ENCODE measurements at regions of chr1 and their contacts with region 1.

Region 1: DNA sequence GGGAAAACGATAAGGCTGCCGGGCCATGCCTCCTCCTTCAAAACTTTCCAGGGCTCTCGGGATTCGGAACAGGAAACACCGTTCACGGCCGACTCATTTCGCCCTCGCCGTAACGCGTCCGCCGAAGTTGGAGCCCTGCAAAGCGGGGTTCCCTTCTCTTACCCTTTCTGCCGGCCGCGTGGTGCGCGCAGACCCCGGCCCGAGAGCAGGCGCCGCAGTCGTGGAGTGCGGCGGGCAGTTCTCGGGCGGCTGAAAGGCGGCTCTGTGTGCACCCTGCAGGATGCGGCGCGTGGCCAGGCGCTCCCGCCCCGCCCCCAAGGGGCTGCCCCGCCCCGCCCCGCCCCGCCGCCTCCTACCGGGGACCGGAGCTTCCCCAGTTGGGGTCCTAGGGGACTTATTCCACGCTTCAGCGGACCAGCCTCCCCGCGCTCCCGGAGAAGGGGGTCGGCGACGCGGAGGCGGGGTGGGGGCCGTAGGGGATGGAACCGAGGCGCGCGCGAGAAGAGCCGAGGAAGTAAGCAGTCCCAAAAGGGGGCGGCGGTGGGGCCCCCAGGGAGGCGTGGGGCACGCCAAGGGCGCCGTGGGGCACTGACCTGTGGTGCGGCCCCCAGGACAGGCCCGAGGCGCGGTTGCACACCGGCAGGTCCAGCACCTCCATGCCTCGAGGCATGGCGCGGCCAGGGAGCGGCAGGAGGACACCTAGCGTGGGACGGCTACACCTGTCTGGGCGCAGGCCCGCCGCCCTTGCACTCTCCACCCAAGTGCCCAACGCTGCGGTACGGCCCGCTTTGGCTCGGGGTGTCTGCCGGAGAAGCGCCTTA is at the start of gene MCOLN2:
- DNase-seq: peak; percentile 52
- H3K4me3 Mint-ChIP-seq: peak within 1 kb of the TSS; percentile 88
- H3K27ac Mint-ChIP-seq: peak within 1 kb of the TSS; percentile 88
- H3K4me1 Mint-ChIP-seq: peaks cover 55% of the 10 kb centered on the region
- H3K27me3 Mint-ChIP-seq: peaks cover 12% of the 10 kb centered on the region
- total RNA-seq, gene MCOLN2: 117 and 119 TPM in 2 replicates

Region 2: GRCh38 chr1:84853741-84854721 is 143.0 kb before region 1 on chr1:
- intact Hi-C with region 1: loop called (anchors 2 kb)
- DNase-seq: peak; percentile 61
- H3K4me3 Mint-ChIP-seq: peak overlapping the region; percentile 0
- H3K27ac Mint-ChIP-seq: peak overlapping the region; percentile 66
- H3K4me1 Mint-ChIP-seq: peaks cover 42% of the 10 kb centered on the region
- H3K27me3 Mint-ChIP-seq: peaks cover 1% of the 10 kb centered on the region

Region 3: GRCh38 chr1:85027242-85027983 is 30.4 kb after region 1 on chr1:
- intact Hi-C with region 1: loop called (anchors 1 kb)
- DNase-seq: no peak
- H3K4me3 Mint-ChIP-seq: no peak overlapping the region
- H3K27ac Mint-ChIP-seq: peak overlapping the region; percentile 53
- H3K4me1 Mint-ChIP-seq: peaks cover 10% of the 10 kb centered on the region
- H3K27me3 Mint-ChIP-seq: peaks cover 6% of the 10 kb centered on the region

Region 4: DNA sequence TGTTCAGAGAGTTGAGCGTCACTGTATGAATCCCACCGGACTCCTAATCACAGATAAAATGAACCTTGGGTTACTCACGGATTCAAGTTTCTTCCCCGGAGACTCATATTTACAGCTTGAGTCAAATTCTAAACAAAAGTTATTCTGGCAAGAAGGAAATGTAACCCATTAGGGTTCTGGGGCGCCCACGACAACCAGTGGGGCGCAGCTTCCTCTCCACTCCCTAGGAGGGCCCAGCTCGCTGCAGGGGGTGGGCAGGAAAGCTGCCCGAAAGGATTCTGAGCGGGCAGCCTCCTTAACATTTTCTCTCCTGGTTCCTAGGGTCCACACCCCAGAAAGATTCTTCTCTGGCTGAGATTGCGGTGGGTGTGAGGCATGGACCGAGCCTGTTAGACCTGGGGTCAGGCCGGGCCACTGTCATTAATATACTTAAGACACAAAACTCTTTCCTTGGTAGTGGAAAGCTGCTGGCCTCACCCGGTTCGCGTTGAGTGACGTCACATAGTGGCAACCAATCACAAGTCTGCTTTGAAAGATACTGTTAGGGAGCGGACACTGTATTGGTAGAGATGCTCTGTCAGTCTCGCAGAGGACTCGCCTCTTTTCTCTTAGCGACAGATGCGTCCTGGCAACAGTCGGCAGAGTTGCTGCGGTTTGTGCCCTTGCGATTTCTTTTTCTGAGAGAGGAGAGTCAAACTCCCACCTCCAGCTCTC is 64.8 kb after region 1 on chr1:
- intact Hi-C with region 1: loop called (anchors 1 kb)
- DNase-seq: peak; percentile 87
- H3K4me3 Mint-ChIP-seq: peak overlapping the region; percentile 85
- H3K27ac Mint-ChIP-seq: peak overlapping the region; percentile 62
- H3K4me1 Mint-ChIP-seq: peaks cover 15% of the 10 kb centered on the region
- H3K27me3 Mint-ChIP-seq: peaks cover 16% of the 10 kb centered on the region

Region 5: DNA sequence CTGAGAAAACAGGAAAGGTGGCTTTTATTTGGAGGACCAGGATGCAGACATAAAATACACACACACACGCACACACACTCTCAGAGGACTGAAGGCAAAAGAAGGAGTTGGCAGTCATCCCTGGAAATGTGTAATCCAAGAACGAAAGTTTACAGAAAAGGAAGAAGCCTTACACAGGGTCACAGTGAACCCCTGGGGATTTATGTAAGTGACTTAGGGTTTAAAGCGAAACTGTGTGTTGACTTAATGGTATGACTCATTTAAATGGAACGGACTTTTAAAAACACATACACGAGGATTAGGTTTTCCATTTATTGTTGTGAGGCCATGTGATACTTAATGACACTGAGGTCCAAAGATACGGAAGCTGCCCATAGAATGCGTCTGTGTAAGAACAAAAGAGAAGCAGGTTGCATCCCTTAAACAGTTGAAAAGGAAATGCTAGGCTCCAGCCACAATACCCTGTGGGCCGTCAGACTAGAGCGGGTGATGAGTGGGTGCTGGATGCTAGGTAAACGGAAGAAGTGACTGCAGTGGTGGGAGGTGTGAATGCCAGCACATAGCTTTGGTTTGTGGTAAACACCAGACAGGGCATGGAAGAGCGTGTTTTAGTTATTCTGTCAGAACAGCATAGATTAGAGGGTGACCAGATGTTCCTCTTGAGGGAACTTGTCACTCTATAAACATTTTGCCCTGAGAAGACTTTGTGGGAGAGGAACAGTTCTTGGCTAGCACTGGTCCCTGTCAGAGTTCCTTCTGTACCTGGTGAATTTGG is 301.0 kb after region 1 on chr1:
- intact Hi-C with region 1: loop called (anchors 5 kb)
- DNase-seq: peak; percentile 62
- H3K4me3 Mint-ChIP-seq: peak overlapping the region; percentile 1
- H3K27ac Mint-ChIP-seq: peak overlapping the region; percentile 80
- H3K4me1 Mint-ChIP-seq: peaks cover 34% of the 10 kb centered on the region
- H3K27me3 Mint-ChIP-seq: peaks cover 47% of the 10 kb centered on the region